ENCODE measurements at regions of chr20 and their contacts with region 1.

Region 1: DNA sequence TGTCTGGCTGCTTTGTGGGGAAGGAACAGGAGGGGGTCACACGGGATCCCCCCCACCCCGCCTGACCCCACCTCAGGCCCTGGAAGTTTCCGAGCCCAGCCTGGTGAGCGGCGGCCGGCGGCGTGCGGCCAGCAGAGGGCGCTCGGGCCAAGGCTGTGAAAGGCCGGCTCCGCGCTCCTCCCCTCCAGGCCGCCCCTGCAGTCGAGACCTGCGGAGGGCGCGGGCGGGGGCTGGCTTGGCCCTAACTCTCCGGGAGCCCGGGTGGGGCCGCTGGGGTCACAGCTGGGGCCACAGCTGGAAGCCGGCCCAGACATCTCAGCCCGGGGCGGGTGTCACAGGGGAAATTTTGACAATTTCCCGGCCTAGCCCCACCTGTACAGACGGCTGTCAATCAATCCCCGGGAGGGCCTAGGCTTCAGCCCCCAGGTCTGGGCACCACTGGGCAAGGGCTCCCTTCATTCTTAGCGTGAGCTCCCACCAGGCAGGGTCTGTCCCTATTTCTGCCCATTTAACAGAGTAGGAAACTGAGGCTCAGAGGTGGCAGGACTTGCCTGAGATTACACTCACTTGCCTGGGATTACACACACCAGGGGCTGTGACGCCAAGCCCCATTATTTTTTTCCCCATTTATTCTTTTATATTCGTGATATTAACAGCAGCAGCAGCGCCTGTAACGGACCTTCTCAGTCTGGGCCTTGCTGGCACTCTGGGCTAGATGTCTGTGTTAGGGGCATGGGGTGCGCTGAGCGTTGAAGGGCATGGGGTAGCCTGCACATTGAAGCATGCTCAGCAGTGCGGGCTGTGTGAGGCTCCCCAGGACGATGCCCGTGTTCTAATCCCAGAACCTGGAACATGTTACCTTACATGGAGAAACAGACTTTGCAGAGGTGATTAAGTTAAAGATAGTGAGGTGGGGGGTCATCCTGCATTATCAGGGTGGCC is 23.0 kb downstream of the ZBP1 start:
- DNase-seq: peak; percentile 27 to 95 (median 68)

Region 2: DNA sequence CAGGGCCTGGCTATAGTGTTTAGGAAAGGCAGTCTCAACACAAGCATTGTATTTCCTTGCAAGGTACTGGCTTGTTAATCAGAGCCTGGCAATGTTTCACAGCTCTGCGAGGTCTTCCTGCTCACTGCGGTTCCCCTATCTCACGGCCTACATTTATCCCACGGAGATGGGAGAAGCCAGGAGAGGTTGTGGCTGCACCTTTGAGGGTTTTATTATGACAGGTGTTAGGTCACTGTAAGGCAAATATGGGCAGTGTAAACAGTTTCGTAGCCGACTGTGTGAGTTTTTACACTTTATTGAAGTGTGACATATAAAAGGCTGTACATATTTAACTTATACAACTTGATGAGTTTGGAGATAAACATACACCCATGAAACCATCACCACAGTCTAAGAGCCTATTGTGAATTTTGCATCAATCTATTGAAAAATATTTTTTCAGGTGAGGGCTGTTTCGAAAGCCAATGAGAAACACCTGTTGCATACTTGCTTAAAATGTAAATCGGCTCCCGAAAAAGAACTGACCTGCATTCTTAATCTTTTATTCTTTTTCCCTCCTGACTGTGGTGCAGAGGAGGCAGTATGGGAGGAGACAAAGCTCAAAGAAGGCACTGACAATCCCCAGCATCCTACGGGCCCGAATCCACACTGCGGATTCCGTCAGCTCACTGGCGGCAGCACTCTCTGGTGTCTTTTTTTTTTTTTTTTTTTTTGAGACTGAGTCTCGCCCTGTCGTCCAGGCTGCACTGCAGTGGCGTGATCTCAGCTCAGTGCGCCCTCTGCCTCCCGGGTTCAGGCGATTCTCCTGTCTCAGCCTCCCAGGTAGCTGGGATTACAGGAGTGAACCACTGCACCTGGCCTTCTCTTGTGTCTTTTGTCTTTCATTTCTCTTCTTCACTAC is 213.6 kb before region 1 on chr20:
- intact Hi-C with region 1: loop called (anchors 5 kb)
- DNase-seq: peak in 2 of 10 donors; percentile 48 to 57

Region 3: GRCh38 chr20:57514273-57514751 is 83.0 kb before region 1 on chr20:
- intact Hi-C with region 1: loop called (anchors 1 kb)
- DNase-seq: peak in 9 of 10 donors; percentile 41 to 93 (median 68)

Region 4: DNA sequence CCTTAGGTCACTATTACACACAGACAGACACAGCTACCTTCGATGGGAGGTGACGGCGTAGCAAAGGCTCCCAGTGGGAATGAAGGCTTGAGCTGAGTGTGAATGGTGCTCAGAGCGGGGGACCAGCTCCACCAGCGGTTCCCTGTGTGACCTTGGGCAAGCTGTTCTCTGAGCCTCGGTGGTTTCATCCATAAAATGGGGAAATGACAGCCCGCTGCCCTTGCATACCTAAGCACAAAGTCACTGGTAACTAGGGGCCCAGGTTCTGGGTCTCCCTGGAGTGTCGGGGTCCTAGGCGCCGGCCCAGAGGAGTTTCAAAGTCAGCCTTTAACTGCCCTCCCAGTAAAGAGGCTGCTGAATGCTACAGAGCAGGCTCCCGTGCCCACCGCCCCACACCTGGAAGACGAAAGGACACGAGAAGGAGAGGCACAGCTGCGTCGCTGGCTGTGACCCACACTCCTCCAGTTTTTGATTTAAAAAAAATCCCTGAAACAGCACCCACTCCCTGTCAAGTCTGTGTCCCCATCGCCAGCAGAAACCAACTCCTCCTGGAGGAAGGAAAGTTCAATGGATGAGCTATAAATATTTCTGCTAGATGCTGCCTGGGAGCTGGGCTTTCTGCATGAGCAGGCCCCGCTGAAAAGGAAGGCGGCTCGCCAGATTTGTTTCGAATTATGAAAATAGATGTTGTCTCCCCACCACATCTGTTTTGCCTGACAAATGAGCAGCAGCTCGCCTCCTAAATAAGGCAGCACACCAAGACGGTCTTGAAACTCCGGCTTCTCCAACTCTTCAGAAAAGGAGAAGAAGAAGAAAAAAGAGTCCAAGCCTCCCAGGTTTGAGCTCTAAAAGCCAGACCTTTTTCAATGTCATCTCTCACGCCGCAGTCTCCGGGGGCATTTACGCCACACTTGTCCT is 85.2 kb after region 1 on chr20:
- intact Hi-C with region 1: no loop called
- DNase-seq: peak in 8 of 10 donors; percentile 33 to 92 (median 56)

Region 5: GRCh38 chr20:58179432-58180099 is 582.3 kb after region 1 on chr20:
- intact Hi-C with region 1: loop called (anchors 10 kb)
- DNase-seq: peak in 9 of 10 donors; percentile 34 to 93 (median 67)

Region 6: GRCh38 chr20:58623826-58624473 is 1026.7 kb after region 1 on chr20:
- intact Hi-C with region 1: no loop called
- DNase-seq: peak; percentile 25 to 97 (median 74)

Measured in posterior cingulate gyrus (tissue), 11 donors.